GM12878 (cell line): ENCODE measurements at regions of chr13 and their contacts with region 1.

Region 1: GRCh38 chr13:108895220-108895704 is 265.9 kb downstream of the MYO16 start:
- DNase-seq: no peak
- ATAC-seq: peak; percentile 71
- H3K4me3 ChIP-seq: no peak overlapping the region
- H3K27ac ChIP-seq: no peak overlapping the region
- H3K4me1 ChIP-seq: no peaks in the 10 kb centered on the region
- H3K27me3 ChIP-seq: no peaks in the 10 kb centered on the region
- CTCF ChIP-seq: peak; percentile 20 to 61 (median 37); a peak in 5 of 6 replicates
- EP300 ChIP-seq: no peak
- POLR2A ChIP-seq: no peak
- RAD21 ChIP-seq: peak; percentile 59

Region 2: DNA sequence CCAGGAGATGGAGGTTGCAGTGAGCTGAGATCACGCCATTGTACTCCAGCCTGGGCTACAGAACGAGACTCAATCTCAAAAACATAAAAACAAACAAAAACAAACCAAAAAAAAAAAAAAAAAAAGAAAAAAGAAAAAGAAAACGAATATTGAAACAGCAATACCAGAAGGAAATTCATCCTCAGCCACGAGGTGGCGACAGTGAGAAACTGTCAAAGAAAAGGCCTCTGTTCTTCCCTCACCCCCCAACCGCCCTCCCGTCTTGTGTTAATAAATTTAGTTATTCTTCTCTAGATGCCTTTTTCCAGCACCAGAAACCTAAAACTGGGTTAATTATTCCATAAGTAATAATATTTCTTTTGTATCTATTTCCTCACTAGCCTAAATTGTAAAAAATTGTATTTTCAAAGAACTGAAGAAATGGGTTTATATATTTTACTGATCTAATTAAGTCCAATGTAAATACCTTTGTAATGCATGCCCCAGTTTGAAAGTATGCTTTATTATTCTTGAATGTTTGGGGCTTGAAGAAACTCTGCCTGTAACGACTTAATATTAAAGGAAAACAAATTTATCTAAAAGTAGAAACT is 718.5 kb before region 1 on chr13:
- CTCF ChIA-PET with region 1: interaction called, 3 read pairs
- POLR2A ChIA-PET with region 1: no interaction called
- RAD21 ChIA-PET with region 1: no interaction called
- SMC1A ChIA-PET with region 1: no interaction called
- in situ Hi-C with region 1: no loop called
- intact Hi-C with region 1: loop called (anchors 5 kb)
- DNase-seq: no peak
- ATAC-seq: peak; percentile 79
- H3K4me3 ChIP-seq: no peak overlapping the region
- H3K27ac ChIP-seq: no peak overlapping the region
- H3K4me1 ChIP-seq: no peaks in the 10 kb centered on the region
- H3K27me3 ChIP-seq: no peaks in the 10 kb centered on the region
- CTCF ChIP-seq: peak; percentile 41 to 56 (median 45)
- EP300 ChIP-seq: no peak
- POLR2A ChIP-seq: no peak
- RAD21 ChIP-seq: peak; percentile 43

Region 3: GRCh38 chr13:108322206-108322824 is 572.9 kb before region 1 on chr13:
- CTCF ChIA-PET with region 1: interaction called, 43 read pairs
- POLR2A ChIA-PET with region 1: no interaction called
- RAD21 ChIA-PET with region 1: interaction called, 19 read pairs
- SMC1A ChIA-PET with region 1: interaction called, 22 read pairs
- in situ Hi-C with region 1: loop called (anchors 5 kb)
- intact Hi-C with region 1: loop called (anchors 1 kb)
- DNase-seq: peak; percentile 9
- ATAC-seq: peak; percentile 91
- H3K4me3 ChIP-seq: no peak overlapping the region
- H3K27ac ChIP-seq: no peak overlapping the region
- H3K4me1 ChIP-seq: no peaks in the 10 kb centered on the region
- H3K27me3 ChIP-seq: no peaks in the 10 kb centered on the region
- CTCF ChIP-seq: peak; percentile 54 to 77 (median 70)
- EP300 ChIP-seq: no peak
- POLR2A ChIP-seq: no peak
- RAD21 ChIP-seq: peak; percentile 86

Region 4: DNA sequence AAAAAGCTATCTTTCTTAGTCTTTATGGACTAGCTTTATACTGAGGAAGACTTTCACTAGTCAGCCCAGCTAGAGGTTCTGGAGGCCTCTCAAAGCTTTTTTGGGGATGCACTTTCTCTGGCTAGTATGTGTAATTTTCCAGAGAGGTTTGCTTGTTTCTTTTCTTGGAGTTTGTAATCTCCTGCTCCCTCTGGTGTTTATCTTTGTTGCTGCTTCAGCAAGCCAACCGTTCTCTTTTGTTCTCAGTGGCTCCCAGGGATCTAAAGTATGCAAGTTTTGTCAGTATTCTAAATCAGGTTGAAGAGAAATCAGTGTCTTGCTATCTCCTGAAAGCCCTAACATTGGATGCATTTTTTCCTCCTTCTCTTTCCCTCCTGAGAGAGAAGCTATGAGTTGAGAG is 387.0 kb before region 1 on chr13:
- CTCF ChIA-PET with region 1: interaction called, 5 read pairs
- POLR2A ChIA-PET with region 1: no interaction called
- RAD21 ChIA-PET with region 1: interaction called, 9 read pairs
- SMC1A ChIA-PET with region 1: interaction called, 8 read pairs
- in situ Hi-C with region 1: no loop called
- intact Hi-C with region 1: loop called (anchors 10 kb)
- DNase-seq: no peak
- ATAC-seq: peak; percentile 34; the same call in 1 of the 3 replicates
- H3K4me3 ChIP-seq: no peak overlapping the region
- H3K27ac ChIP-seq: no peak overlapping the region
- H3K4me1 ChIP-seq: no peaks in the 10 kb centered on the region
- H3K27me3 ChIP-seq: no peaks in the 10 kb centered on the region
- CTCF ChIP-seq: peak in 2 of 3 experiments; percentile 29 to 46; a peak in 2 of 6 replicates
- EP300 ChIP-seq: no peak
- POLR2A ChIP-seq: no peak
- RAD21 ChIP-seq: peak; percentile 23; the same call in 1 of the 2 replicates

Region 5: DNA sequence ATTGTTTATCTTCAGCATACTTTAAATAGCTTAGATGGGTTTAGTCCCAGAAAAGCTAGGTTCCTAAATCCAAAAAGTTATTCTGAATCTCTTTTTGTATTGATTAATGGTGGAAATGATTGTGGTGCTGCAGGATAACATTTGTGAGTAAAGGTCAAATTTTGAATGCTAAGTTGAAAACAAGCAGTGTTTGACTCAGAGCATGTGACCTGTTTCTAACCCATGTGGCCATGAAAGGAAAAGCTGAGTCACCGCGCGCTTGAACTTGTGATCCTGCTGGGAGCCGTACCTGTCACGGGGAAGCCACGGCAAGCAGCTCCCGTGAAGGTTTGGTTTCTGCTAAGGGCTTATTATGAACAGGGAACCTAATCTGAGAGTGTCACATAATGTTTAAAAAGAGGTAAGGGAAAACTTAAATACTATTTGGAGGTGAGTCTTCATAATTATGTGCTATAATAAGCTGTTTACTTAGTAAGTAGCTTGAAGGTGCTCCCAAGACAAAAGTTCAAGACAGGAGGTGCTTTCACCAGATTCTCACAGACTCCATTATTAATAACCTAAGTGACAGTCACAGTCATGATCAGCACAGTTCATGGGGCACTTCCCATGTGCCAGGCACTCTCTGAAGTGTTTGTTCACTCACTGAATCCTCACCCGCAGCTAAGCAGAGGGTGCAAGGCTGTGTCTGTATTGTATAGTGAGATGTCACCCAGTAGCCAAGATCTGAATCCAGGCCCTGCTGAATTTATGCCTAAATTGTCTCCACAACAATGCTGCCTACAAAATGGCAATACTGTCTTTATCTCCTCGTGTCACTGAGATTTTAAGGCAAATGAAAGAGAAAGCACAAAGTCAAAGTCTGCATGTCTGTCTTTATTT is 20.6 kb after region 1 on chr13:
- CTCF ChIA-PET with region 1: interaction called, 6 read pairs
- POLR2A ChIA-PET with region 1: no interaction called
- RAD21 ChIA-PET with region 1: interaction called, 3 read pairs
- SMC1A ChIA-PET with region 1: interaction called, 11 read pairs
- in situ Hi-C with region 1: no loop called
- intact Hi-C with region 1: no loop called
- DNase-seq: peak; percentile 52
- ATAC-seq: peak; percentile 93
- H3K4me3 ChIP-seq: peak overlapping the region; percentile 36
- H3K27ac ChIP-seq: peak overlapping the region; percentile 20; the same call in 1 of the 2 replicates
- H3K4me1 ChIP-seq: peaks cover 9% of the 10 kb centered on the region
- H3K27me3 ChIP-seq: no peaks in the 10 kb centered on the region
- CTCF ChIP-seq: no peak
- EP300 ChIP-seq: peak in 1 of 2 experiments; percentile 61; a peak in 2 of 4 replicates
- POLR2A ChIP-seq: 0 out of 2 replicates have a peak, but pooled peaks have one; percentile 38
- RAD21 ChIP-seq: no peak

Region 6: DNA sequence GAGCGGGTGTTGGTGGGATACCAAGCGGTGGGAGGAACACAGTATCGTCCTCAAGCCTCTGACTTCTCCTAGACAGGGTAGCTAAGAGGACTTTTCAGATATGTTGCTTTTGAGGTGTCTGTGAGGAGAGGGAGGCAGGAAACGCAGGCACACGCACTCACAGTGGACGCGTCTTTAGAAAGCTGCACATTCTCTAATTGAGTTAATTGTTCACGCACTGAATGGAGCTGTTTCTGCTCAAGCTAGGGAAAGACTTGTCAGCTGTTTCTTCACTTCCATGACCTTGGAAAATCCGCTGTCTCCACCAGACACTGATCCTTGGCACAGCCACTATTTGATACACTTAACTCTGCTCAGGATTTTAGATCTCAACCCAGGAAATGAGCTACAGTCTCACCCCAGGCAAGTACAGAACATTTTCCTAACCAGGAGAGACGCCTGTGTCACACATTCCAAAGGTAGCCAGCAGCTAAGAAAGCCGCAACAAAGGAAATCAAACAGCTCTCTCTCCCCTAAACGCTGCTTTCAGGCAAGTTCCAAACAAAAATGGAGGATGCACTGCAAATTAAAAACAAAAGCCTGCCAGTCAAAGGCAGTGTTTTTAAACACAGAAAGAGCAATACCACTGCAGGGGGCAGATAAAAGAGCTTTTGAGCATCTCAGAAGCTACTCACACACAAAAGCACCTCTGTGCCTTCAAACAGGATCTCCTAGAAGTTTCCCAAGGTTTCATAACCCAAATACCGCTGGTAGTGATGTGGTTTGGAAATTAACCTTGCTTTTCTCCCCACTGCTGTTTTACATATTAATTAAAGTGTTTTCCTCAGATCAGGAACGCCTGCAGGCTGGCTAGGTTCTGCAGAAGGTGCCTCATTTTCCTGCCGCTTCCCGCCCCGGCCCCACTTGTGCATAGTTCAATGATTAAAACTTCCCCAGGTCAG is 833.8 kb after region 1 on chr13:
- CTCF ChIA-PET with region 1: no interaction called
- POLR2A ChIA-PET with region 1: no interaction called
- RAD21 ChIA-PET with region 1: no interaction called
- SMC1A ChIA-PET with region 1: no interaction called
- in situ Hi-C with region 1: no loop called
- intact Hi-C with region 1: no loop called
- DNase-seq: no peak
- ATAC-seq: no peak
- H3K4me3 ChIP-seq: no peak overlapping the region
- H3K27ac ChIP-seq: no peak overlapping the region
- H3K4me1 ChIP-seq: no peaks in the 10 kb centered on the region
- H3K27me3 ChIP-seq: no peaks in the 10 kb centered on the region
- CTCF ChIP-seq: no peak
- EP300 ChIP-seq: no peak
- POLR2A ChIP-seq: no peak
- RAD21 ChIP-seq: no peak